ENCODE measurements at regions of chrX and their contacts with region 1.

Region 1: GRCh38 chrX:57119416-57119815 is 1.9 kb downstream of the SPIN2B start:
- DNase-seq: no peak
- H3K4me3 ChIP-seq: no peak overlapping the region
- H3K27ac ChIP-seq: no peak overlapping the region
- H3K4me1 ChIP-seq: no peaks in the 10 kb centered on the region
- H3K27me3 ChIP-seq: no peaks in the 10 kb centered on the region
- CTCF ChIP-seq: no peak
- EP300 ChIP-seq: no peak
- POLR2A ChIP-seq: no peak

Region 2: DNA sequence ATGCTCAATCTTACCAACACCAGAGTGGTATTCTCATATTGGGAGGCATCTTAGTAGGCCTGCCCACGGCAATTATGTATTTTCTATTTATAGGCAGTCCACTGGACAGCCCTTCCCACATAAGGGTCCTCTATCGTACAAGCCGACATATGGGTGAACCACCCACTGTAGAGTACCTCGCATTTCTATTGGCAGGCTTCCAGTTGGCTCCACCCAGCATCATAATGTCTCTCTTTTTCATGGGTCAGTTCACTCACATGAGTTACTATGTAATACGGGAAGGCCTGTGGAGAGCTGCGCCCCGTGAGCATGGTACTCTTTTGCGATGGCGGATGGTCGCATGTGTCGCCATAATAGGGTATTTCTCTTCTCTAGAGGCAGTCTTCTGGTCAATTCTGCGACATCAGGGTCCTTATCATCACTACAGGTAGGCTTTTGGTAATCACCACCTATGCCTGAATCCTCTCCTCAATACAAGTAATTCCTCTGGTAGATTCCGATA is 1525.6 kb before region 1 on chrX:
- intact Hi-C with region 1: no loop called
- DNase-seq: no peak
- H3K4me3 ChIP-seq: no peak overlapping the region
- H3K27ac ChIP-seq: no peak overlapping the region
- H3K4me1 ChIP-seq: no peaks in the 10 kb centered on the region
- H3K27me3 ChIP-seq: no peaks in the 10 kb centered on the region
- CTCF ChIP-seq: no peak
- EP300 ChIP-seq: no peak
- POLR2A ChIP-seq: no peak

Region 3: DNA sequence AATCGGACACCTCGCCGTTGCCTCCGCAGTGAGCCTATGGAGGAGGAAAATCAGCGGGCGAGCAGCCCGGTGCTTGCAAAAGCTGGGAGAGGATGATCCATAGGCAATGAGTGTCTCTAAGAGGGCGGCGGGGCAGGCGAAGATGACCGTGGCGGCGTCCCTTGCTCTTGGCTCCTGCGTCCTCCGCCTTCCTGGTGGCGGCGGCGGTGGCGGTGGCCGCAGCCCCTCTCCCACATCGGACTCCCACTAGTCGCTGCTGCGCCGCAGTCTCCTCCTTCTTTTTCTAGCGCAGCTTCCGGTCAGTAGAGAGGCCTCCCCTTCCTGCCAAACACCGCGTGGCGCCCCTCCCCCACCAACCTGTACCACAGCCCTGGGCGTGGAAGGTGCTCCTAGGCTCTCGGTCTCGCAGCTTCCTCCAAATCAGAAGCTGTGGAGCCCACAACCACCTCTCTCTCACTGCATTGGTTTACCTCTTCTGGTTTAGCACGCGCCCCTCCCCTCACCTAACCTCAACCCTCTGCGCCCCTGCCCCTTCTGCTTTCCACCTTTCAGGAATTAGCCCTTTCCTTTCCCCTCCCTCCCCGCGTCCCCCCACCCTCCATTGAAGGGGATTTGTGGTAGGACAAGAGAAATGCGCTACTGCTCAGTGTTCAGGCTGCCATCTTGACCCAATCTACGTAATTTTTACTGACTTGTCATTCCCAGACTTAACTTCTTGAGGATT is 124.0 kb before region 1 on chrX and contains the start of gene SPIN3:
- intact Hi-C with region 1: loop called (anchors 10 kb)
- DNase-seq: peak; percentile 89
- H3K4me3 ChIP-seq: peak within 1 kb of the TSS; percentile 60 to 65 (median 62)
- H3K27ac ChIP-seq: peak within 1 kb of the TSS; percentile 73 to 81 (median 78)
- H3K4me1 ChIP-seq: peaks cover 0 to 11% (median 0%) of the 10 kb centered on the region in 4 donors
- H3K27me3 ChIP-seq: no peaks in the 10 kb centered on the region
- CTCF ChIP-seq: no peak
- EP300 ChIP-seq: no peak
- POLR2A ChIP-seq: peak in 1 of 2 donors; percentile 17
- total RNA-seq, gene SPIN3: 6.5 to 16.9 (median 9.3) TPM

Region 4: DNA sequence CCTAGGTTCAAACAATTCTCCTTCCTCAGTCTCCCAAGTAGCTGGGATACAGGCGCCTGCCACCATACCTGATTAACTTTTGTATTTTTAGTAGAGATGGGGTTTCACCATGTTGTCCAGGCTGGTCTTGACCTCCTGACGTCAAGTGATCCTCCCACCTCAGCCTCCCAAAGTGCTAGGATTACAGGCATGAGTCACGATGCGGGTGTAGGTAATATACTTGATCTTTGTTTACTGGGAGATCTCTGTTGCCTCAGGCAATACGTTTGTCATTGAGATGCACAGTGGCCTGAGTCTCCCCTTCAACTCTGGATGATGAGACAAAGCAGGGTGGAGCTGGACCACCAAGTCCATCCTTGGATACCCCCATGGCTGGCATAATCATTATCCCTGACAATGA is 79.4 kb before region 1 on chrX:
- intact Hi-C with region 1: no loop called
- DNase-seq: no peak
- H3K4me3 ChIP-seq: no peak overlapping the region
- H3K27ac ChIP-seq: no peak overlapping the region
- H3K4me1 ChIP-seq: no peaks in the 10 kb centered on the region
- H3K27me3 ChIP-seq: no peaks in the 10 kb centered on the region
- CTCF ChIP-seq: no peak
- EP300 ChIP-seq: no peak
- POLR2A ChIP-seq: no peak